Left ventricle myocardium superior (tissue), 1 donor: ENCODE measurements at regions of chr7 and their contacts with region 1.

Region 1: GRCh38 chr7:75914730-75915585 is at the start of gene POR:
- DNase-seq: peak; percentile 97
- ATAC-seq: peak; percentile 99
- total RNA-seq, gene POR: 45.7 TPM

Region 2: DNA sequence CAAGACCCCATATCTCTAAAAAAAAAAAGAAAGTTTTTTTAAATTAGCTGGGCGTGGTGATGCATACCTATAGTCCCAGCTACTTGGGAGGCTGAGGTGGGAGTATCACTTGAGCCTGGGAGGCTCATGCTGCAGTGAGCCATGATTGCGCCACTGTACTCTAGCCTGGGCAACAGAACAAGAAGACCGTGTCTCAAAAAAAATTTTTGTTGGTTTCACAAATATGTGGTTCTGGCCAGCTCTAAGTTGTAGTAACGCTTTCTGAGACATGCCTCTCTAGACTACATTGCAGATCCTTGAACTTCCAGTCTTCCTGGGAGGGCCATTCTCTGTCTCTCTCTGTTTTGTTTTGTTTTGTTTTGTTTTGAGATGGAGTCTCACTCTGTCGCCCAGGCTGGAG is 60.7 kb before region 1 on chr7:
- intact Hi-C with region 1: no loop called
- DNase-seq: no peak
- ATAC-seq: no peak

Region 3: GRCh38 chr7:75878769-75879611 is 36.0 kb before region 1 on chr7 and contains the start of gene RHBDD2:
- intact Hi-C with region 1: loop called (anchors 5 kb)
- DNase-seq: peak; percentile 97
- ATAC-seq: peak; percentile 99
- total RNA-seq, gene RHBDD2: 17.9 TPM

Region 4: DNA sequence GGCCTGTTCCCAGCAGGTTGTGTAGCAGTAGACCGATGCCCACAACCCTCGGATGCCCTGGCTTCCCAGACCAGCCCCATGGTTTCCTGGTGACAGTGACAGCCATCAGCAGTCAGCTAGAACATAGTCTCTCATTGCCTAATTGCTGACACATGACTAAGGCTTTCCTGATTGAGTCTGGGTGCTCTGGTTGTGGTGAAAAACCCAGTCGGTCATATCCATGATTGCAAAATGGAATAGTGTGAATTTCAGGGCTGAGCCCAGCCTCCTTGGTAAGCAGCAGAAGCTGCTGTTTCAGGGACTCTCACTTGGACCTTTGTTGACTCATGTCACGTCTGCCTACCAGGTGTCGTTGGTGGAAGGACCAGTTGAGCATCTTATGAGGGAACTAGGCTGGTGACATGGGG is 36.6 kb after region 1 on chr7:
- intact Hi-C with region 1: loop called (anchors 5 kb)
- DNase-seq: no peak
- ATAC-seq: peak; percentile 76

Region 5: DNA sequence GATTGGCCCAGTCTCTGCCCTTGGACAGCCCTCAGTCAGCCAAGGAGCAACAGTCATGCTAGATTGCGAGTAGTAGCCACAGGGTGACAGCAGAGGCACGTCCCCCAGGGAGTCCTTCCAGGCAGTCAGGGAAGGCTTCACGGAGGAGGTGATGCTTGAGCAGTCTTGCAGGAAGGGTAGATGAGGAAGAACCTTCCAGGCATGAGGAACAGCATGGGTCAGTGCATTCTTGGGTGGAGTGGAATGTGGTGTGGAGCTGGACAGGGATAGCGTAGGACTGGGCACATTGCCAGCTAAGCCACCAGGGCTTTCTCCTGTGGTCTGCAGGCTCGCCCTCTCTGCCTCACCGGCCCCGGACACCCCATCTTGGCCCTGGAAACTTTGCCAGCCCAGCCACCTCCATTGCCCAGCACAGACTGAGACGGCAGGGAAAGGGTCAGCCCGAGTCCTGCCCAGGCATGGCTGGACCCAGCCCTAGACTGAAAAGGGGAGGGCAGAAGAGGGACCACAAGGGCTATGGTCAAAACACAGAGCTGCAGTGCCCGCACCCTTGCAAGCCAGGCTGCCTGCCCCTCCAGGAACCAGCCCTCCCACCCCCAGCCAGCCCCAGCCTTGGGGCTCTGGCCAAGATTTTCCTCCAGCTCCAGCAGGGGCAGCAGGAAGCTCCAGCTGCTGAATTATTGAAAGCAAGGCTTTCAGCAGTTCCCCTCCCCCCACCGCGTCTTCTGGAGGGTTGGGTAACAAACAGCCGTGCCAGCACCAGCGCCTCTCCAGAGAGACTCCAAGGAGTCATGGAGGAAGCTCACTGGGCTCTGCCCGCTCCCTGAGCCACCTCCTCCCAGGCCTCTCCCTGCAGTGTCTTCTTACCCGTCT is 305.5 kb after region 1 on chr7:
- intact Hi-C with region 1: no loop called
- DNase-seq: no peak
- ATAC-seq: no peak